IMR-90 (cell line): ENCODE measurements at regions of chr6 and their contacts with region 1.

Region 1: GRCh38 chr6:85449818-85450759 is at the start of gene NT5E:
- DNase-seq: peak; percentile 69
- ATAC-seq: peak; percentile 87
- H3K4me3 ChIP-seq: peak within 1 kb of the TSS; percentile 97
- H3K27ac ChIP-seq: peak within 1 kb of the TSS; percentile 92
- H3K4me1 ChIP-seq: peaks cover 26% of the 10 kb centered on the region
- H3K27me3 ChIP-seq: no peaks in the 10 kb centered on the region
- CTCF ChIP-seq: peak; percentile 9; the same call in 1 of the 2 replicates
- POLR2A ChIP-seq: peak; percentile 89
- RAD21 ChIP-seq: no peak
- total RNA-seq, gene NT5E: 280 and 281 TPM in 2 replicates

Region 2: GRCh38 chr6:85354761-85355618 is 95.1 kb before region 1 on chr6:
- CTCF ChIA-PET with region 1: interaction called, 12 read pairs
- POLR2A ChIA-PET with region 1: no interaction called
- dilution Hi-C with region 1: no loop called
- in situ Hi-C with region 1: no loop called
- intact Hi-C with region 1: loop called (anchors 1 kb)
- DNase-seq: peak; percentile 72
- ATAC-seq: peak; percentile 99
- H3K4me3 ChIP-seq: no peak overlapping the region
- H3K27ac ChIP-seq: no peak overlapping the region
- H3K4me1 ChIP-seq: peaks cover 2% of the 10 kb centered on the region
- H3K27me3 ChIP-seq: no peaks in the 10 kb centered on the region
- CTCF ChIP-seq: peak; percentile 97
- POLR2A ChIP-seq: 0 out of 2 replicates have a peak, but pooled peaks have one; percentile 28
- RAD21 ChIP-seq: peak; percentile 97

Region 3: DNA sequence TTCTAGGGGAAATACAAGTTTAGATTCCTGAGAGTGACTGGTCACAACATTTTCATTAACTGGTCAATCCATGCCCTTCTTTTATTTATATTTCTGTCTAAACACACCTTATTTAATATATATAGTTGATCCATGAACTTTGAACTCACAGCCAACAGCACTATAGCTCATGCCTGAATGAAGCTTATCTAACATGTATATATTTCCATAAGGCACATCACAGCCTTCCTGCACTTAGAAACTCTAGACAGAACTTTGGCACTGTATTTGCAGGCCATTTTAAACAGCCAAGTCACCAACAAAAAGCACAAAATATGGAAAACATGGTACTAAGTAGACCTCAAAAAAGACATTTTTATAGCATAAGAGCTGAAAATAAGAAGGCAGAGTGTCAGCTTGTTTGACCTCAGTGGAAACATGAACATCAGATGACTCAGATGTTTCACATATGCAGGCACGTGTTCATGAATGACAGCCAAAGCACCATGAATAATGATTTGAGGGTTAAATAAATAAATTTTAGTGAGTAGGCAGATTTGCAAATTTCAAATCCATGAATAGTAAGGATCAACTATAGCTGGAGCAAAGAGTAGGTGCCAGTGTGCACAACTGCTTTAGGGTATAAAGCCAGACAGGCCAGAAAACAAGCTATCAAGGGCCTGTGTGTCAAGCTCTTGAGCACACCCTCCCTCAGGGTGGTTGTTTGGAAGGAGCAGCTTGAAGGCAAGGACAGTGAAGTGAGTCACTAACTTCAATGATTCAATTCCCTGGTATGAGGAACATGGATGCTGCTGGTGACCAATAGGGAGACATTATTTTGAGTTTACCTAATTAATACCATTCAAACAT is 89.1 kb before region 1 on chr6:
- CTCF ChIA-PET with region 1: interaction called, 12 read pairs
- POLR2A ChIA-PET with region 1: interaction called, 4 read pairs
- dilution Hi-C with region 1: no loop called
- in situ Hi-C with region 1: no loop called
- intact Hi-C with region 1: loop called (anchors 1 kb)
- DNase-seq: peak; percentile 98
- ATAC-seq: peak; percentile 94
- H3K4me3 ChIP-seq: no peak overlapping the region
- H3K27ac ChIP-seq: peak overlapping the region; percentile 14
- H3K4me1 ChIP-seq: peaks cover 16% of the 10 kb centered on the region
- H3K27me3 ChIP-seq: no peaks in the 10 kb centered on the region
- CTCF ChIP-seq: no peak
- POLR2A ChIP-seq: no peak
- RAD21 ChIP-seq: peak; percentile 26; the same call in 1 of the 2 replicates

Region 4: GRCh38 chr6:85404502-85405174 is 45.5 kb before region 1 on chr6:
- CTCF ChIA-PET with region 1: interaction called, 4 read pairs
- POLR2A ChIA-PET with region 1: interaction called, 40 read pairs
- dilution Hi-C with region 1: no loop called
- in situ Hi-C with region 1: loop called (anchors 5 kb)
- intact Hi-C with region 1: loop called (anchors 2 kb)
- DNase-seq: peak; percentile 95
- ATAC-seq: peak; percentile 63
- H3K4me3 ChIP-seq: no peak overlapping the region; the same call in 1 of the 2 replicates
- H3K27ac ChIP-seq: peak overlapping the region; percentile 95
- H3K4me1 ChIP-seq: peaks cover 44% of the 10 kb centered on the region
- H3K27me3 ChIP-seq: no peaks in the 10 kb centered on the region
- CTCF ChIP-seq: no peak
- POLR2A ChIP-seq: peak; percentile 60; the same call in 1 of the 2 replicates
- RAD21 ChIP-seq: no peak; the same call in 1 of the 2 replicates

Region 5: DNA sequence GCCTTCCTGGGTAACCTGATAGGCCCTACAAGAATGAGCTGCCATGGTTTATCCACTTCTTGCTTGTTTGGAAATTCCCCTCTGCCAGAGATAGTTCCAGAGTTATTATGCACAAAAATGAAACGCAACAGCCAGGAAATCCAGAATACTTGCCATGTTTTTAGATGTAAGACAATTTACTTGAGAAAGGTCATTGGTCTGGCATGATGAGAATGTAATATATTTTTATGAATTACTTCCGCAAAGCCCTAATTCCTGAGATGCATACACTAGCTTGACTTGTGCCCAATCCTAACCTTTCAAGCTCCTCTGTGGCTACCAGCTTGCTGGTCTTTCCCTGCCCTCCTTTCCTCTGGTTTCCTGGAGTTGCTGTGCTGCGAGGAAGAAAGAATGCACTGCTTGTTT is 28.1 kb before region 1 on chr6:
- CTCF ChIA-PET with region 1: no interaction called
- POLR2A ChIA-PET with region 1: interaction called, 3 read pairs
- dilution Hi-C with region 1: no loop called
- in situ Hi-C with region 1: no loop called
- intact Hi-C with region 1: loop called (anchors 2 kb)
- DNase-seq: peak; percentile 77
- ATAC-seq: peak; percentile 59
- H3K4me3 ChIP-seq: no peak overlapping the region
- H3K27ac ChIP-seq: peak overlapping the region; percentile 66
- H3K4me1 ChIP-seq: peaks cover 28% of the 10 kb centered on the region
- H3K27me3 ChIP-seq: no peaks in the 10 kb centered on the region
- CTCF ChIP-seq: no peak
- POLR2A ChIP-seq: no peak
- RAD21 ChIP-seq: no peak

Region 6: DNA sequence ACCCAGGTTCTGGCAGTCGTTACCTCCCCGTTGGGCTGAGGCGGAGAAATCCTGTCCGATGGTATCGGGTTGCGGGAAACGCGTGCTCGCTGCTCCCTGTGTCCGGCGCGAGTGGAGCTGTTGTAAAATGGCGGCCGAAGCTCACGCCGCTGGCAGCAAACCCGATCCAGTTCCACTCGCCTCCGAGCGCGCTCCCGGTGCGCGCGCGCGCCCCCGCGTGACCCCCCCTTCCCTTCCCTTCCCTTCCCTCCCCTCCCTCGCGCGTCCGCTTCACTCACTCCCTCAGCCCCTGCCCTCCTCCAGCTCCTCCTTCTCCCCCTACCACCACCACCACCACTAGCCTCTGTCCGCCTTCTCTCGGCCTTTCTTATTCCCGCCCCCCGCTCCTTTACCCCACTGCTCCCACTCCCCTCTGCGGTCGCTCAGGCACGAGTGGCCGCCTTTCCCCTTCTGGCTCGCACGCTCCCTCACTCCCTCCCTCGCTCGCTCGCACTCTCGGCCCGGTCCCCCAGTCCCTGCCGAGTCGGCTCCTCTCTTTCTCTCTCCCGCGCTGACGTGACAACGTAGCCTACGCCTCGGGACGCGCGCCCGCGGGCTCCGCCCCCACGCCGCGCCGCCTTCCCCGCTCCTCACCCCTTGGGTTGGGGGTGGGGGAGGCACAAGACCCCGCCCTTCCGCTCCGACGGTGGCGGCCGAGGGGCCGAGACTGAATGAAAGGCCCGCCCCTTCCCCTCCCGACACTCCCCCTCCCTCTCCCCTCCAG is 192.9 kb after region 1 on chr6 and contains the start of gene SYNCRIP:
- CTCF ChIA-PET with region 1: no interaction called
- POLR2A ChIA-PET with region 1: interaction called, 3 read pairs
- dilution Hi-C with region 1: no loop called
- in situ Hi-C with region 1: no loop called
- intact Hi-C with region 1: loop called (anchors 5 kb)
- DNase-seq: peak; percentile 97
- ATAC-seq: peak; percentile 87
- H3K4me3 ChIP-seq: peak within 1 kb of the TSS; percentile 95
- H3K27ac ChIP-seq: peak within 1 kb of the TSS; percentile 98
- H3K4me1 ChIP-seq: peaks cover 4% of the 10 kb centered on the region; the same call in 1 of the 2 replicates
- H3K27me3 ChIP-seq: no peaks in the 10 kb centered on the region
- CTCF ChIP-seq: no peak
- POLR2A ChIP-seq: peak; percentile 93
- RAD21 ChIP-seq: no peak
- total RNA-seq, gene SYNCRIP: 59.3 and 120 TPM in 2 replicates